PC-3 (cell line): ENCODE measurements at regions of chr13 and their contacts with region 1.

Region 1: DNA sequence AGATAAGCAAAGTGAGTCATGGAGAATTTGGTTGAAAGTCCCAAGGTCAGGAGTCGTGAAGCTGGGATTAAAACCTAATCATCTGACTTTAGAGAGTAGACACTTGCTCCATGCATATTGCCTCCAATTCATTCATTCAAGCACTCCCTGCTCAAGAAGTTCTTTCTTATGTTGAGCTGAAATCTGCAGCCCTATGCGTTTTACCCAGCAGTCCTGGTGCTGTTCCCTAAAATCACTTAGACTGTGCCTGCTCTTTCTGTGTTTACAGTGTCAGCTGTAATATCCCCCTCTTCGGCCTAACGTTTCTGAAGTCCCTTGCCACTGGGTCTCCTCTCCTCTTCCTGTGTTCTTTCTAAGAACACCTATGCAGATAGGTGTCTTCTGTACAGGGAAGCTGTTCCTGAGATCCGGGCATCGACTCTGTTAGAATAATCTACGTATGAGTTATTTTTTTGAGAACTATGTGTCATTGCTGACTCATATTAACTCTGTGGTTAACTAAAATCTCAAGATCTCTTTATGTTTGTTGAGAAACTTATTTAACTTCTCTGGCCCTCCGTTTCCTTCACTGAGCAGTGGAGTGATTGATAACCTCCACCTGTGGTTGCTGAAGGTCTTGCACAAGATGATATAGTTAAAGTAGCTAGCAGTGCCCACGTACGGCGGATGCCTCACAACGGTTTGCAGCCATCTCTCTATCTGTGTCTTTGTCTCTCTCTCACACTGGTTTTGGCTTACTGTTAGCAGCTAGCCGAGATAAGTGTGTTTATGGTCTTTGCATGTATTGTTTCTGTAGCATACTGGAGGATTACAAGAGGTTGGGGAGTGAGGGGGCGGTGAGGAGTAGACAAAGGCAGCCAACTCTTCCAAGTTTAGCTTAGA is 4.7 kb downstream of the ALOX5AP start:
- DNase-seq: peak; percentile 94
- ATAC-seq: peak; percentile 73
- H3K4me3 ChIP-seq: peak overlapping the region; percentile 45; the same call in 1 of the 2 replicates
- H3K27ac ChIP-seq: peak overlapping the region; percentile 72
- H3K4me1 ChIP-seq: peaks cover 38% of the 10 kb centered on the region
- H3K27me3 ChIP-seq: no peaks in the 10 kb centered on the region
- CTCF ChIP-seq: no peak

Region 2: DNA sequence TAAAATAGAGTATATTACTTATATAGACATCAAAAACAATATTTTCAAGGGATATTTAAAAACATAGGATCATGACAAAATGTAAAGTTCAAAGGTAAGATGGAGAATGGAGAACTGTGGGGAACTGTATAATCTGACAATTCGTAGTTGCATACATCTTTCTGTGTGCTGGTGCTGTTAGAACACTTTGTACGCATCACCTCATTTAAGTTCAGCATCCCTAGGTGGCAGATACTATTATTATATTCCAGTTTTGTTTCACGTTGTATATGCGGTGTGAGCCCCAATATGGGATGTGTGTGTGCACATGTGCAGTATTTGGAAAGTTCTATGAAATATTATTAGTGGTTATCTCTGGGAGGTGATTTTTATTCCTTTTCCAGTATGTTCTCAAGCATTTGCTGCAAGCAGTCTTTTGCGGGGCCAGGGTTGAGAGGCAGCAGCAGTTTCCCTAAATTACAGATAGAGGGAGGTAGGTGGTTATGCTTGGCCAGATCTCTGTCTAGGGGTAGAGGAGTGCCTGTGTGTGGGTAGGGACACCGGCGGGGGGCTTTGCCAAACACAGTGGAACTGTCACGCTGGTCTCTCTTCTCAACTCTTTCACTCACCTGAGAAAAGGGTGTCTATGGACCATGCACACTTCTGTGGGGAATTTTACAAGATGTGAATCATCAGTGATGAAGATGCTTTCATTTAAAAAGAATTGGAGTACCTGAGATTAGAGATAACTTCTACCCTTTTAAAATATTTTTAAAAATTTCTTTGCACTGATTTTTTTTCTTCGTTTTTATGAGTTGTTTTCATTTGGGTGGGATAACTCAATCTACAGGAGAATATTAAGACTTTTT is 60.3 kb before region 1 on chr13:
- CTCF ChIA-PET with region 1: no interaction called
- POLR2A ChIA-PET with region 1: no interaction called
- intact Hi-C with region 1: loop called (anchors 5 kb)
- DNase-seq: peak; percentile 27
- ATAC-seq: peak; percentile 75
- H3K4me3 ChIP-seq: no peak overlapping the region
- H3K27ac ChIP-seq: no peak overlapping the region
- H3K4me1 ChIP-seq: peaks cover 4% of the 10 kb centered on the region; the same call in 1 of the 2 replicates
- H3K27me3 ChIP-seq: no peaks in the 10 kb centered on the region
- CTCF ChIP-seq: peak; percentile 64

Region 3: DNA sequence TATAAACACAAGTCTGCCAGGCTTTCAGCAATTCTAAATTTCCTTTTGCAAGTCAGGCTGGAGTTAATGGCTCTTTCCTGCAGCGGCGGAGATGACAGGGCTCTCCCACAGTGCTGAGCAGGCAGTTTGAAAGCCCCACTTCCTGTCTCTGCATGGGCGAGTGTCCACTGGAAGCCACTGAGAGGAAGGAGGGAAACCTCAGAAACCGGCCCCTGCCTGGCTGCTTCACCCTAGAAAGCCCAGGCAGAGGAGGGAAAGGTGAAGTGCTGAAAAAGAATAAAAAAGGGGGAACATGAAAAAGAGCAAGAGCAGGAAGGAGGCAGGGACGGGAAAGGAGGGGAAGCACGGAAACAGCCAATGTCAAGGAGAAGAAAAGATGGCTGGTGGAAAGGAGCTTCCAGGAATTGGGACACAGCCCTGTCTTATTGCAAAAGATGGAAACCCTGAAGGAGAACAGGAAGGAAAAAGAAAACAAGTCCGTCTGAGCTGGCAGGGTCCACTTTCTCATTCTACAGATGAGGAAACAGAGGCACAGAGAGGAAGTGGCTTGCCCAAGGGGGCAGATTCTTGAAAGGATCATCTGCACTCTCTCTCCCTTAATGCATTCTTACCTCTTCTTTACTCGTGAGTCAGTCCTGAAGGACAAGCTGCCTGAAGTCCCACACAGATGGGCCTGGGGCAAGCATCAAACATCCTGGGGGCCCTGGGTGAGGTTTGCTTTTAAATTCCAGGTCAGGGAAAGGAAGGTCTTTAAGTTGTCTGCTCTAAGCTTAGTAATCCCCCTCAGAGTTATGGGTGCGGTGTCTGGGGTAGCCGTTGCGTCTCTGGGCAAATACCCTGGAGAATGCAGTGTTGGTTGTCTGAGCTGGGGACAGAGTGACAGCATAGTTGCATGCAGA is 43.5 kb before region 1 on chr13:
- CTCF ChIA-PET with region 1: no interaction called
- POLR2A ChIA-PET with region 1: interaction called, 11 read pairs
- intact Hi-C with region 1: no loop called
- DNase-seq: no peak
- ATAC-seq: no peak
- H3K4me3 ChIP-seq: no peak overlapping the region
- H3K27ac ChIP-seq: no peak overlapping the region
- H3K4me1 ChIP-seq: no peaks in the 10 kb centered on the region
- H3K27me3 ChIP-seq: no peaks in the 10 kb centered on the region
- CTCF ChIP-seq: no peak

Region 4: GRCh38 chr13:30718661-30719524 is 21.1 kb before region 1 on chr13:
- CTCF ChIA-PET with region 1: interaction called, 3 read pairs
- POLR2A ChIA-PET with region 1: no interaction called
- intact Hi-C with region 1: loop called (anchors 1 kb)
- DNase-seq: peak; percentile 91
- ATAC-seq: peak; percentile 82
- H3K4me3 ChIP-seq: peak overlapping the region; percentile 12; the same call in 1 of the 2 replicates
- H3K27ac ChIP-seq: peak overlapping the region; percentile 68
- H3K4me1 ChIP-seq: peaks cover 48% of the 10 kb centered on the region
- H3K27me3 ChIP-seq: no peaks in the 10 kb centered on the region
- CTCF ChIP-seq: no peak

Region 5: GRCh38 chr13:30792285-30793000 is 52.4 kb after region 1 on chr13:
- CTCF ChIA-PET with region 1: interaction called, 3 read pairs
- POLR2A ChIA-PET with region 1: no interaction called
- intact Hi-C with region 1: loop called (anchors 2 kb)
- DNase-seq: peak; percentile 91
- ATAC-seq: peak; percentile 84
- H3K4me3 ChIP-seq: no peak overlapping the region; the same call in 1 of the 2 replicates
- H3K27ac ChIP-seq: peak overlapping the region; percentile 39
- H3K4me1 ChIP-seq: peaks cover 39% of the 10 kb centered on the region
- H3K27me3 ChIP-seq: no peaks in the 10 kb centered on the region
- CTCF ChIP-seq: peak; percentile 26; the same call in 1 of the 2 replicates

Region 6: DNA sequence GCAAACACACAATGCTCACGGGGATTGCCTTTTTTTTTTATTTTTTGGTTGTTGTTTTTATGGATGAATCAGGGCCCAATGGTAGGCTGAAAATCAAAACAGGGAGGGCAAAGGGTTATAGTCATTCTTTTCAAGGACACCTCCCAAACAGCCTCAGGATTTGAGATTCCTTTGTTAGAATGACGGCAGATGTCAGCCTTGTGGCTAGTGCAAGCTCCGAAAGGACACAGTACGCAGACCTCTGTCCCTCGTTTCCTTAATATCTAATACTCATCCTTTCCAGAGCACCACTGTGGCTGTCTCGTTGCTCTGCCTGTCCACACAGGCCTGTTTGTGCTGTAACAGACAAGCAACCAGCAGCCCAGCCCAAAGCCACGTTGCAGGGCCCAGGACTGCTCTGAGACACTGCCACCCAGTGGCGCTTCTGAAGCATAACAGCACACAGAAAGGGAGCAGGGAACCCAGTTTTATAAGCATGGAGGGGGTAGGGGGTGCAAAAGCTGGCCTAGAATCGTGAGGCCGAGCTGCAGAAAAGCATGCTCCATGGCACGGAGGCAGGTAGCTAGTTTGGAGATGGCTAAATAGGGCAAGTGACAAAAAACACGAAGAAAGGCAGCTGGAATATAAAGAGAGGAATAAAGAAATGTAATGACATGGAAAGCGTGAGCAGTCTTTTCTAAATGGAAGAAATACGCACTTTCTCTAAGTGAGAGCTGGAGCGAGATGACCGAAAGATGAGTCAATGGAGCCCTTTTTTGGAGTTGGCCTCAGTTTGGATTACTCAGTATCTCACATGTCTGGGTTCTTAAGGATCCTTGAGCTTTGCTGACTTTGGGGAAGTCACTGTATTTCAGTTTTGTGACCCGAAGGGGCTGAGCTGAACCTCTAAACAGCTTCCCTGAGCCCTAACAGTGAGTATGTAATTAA is 125.4 kb after region 1 on chr13:
- CTCF ChIA-PET with region 1: no interaction called
- POLR2A ChIA-PET with region 1: no interaction called
- intact Hi-C with region 1: loop called (anchors 5 kb)
- DNase-seq: peak; percentile 75
- ATAC-seq: peak; percentile 95
- H3K4me3 ChIP-seq: peak overlapping the region; percentile 61
- H3K27ac ChIP-seq: peak overlapping the region; percentile 76
- H3K4me1 ChIP-seq: peaks cover 17% of the 10 kb centered on the region
- H3K27me3 ChIP-seq: no peaks in the 10 kb centered on the region
- CTCF ChIP-seq: peak; percentile 89